K562 (cell line): ENCODE measurements at regions of chr16 and their contacts with region 1.

Region 1: DNA sequence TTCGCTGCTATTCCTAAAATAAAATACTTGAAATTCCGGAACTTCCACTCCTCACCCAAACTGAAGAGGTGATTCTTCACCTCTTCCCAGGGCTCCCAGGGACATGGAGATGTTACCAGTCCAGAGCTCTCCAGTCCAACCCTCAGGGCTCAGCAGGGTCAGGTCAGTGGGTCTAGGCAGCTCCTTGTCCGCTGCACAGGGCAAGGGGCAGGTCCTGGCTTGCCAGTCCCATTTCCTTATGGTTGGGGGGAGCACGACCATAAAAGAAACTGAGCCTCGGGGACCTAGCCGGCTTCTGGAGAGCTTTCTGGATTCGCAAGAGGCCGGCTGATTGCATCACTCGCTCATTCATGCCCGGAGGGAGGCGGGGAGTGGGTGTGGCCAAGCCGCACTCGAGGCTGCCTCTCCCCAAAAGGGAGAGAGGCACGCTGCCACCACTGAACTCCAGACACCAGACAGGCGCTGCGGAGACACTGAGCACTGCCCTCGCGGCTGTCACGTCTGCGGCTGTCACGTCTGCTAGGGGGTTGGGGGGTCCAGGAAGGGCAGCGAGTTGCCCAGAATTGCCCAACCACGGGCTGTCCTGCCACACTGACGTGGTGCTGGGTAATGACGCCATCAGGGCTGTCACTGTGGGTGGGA is 15.8 kb downstream of the SLC7A5 start:
- DNase-seq: peak; percentile 89 to 93 (median 92)
- ATAC-seq: peak; percentile 73
- H3K4me3 ChIP-seq: peak overlapping the region; percentile 28
- H3K27ac ChIP-seq: peak overlapping the region; percentile 98
- H3K4me1 ChIP-seq: peaks cover 56 to 85% of the 10 kb centered on the region in 2 experiments
- H3K27me3 ChIP-seq: no peaks in the 10 kb centered on the region
- CTCF ChIP-seq: no peak
- EP300 ChIP-seq: peak; percentile 62
- POLR2A ChIP-seq: peak; percentile 56
- RAD21 ChIP-seq: peak in 1 of 2 experiments; percentile 19; a peak in 1 of 4 replicates

Region 2: DNA sequence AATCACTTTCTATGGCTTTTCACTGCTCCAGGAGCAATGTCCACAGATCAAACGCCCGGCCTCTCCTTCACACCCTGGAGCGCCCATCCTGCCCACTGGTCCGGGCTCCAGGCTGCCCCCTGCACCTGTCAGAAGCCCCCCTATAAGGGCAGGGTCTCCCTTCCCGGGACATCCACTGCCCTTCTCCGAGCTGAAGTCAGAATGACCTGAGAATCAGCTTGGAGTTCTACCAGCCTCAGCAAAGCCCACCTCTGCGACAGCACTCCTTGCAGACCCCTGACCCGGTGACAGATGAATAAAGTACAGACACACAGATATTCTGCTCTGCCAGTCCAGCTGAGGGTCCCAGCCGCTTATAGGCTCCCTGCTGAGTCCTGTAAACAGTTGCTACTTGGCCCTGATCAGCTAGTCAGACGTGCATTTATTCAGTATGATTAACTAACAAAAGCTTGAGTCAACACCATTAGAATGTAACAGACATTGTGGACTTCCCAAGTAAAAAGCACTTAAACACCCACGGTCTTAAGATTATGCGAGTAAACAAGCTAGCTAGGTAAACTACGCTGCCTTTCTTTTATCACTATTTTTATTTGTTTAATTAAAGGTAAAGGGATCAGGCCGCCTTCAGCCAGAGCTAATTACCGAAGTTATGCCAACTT is 10.9 kb after region 1 on chr16:
- CTCF ChIA-PET with region 1: no interaction called
- POLR2A ChIA-PET with region 1: interaction called, 70 read pairs
- in situ Hi-C with region 1: no loop called
- intact Hi-C with region 1: no loop called
- DNase-seq: no peak
- ATAC-seq: no peak
- H3K4me3 ChIP-seq: no peak overlapping the region
- H3K27ac ChIP-seq: no peak overlapping the region
- H3K4me1 ChIP-seq: peaks cover 41 to 50% of the 10 kb centered on the region in 2 experiments
- H3K27me3 ChIP-seq: no peaks in the 10 kb centered on the region
- CTCF ChIP-seq: no peak
- EP300 ChIP-seq: no peak
- POLR2A ChIP-seq: no peak
- RAD21 ChIP-seq: no peak

Region 3: DNA sequence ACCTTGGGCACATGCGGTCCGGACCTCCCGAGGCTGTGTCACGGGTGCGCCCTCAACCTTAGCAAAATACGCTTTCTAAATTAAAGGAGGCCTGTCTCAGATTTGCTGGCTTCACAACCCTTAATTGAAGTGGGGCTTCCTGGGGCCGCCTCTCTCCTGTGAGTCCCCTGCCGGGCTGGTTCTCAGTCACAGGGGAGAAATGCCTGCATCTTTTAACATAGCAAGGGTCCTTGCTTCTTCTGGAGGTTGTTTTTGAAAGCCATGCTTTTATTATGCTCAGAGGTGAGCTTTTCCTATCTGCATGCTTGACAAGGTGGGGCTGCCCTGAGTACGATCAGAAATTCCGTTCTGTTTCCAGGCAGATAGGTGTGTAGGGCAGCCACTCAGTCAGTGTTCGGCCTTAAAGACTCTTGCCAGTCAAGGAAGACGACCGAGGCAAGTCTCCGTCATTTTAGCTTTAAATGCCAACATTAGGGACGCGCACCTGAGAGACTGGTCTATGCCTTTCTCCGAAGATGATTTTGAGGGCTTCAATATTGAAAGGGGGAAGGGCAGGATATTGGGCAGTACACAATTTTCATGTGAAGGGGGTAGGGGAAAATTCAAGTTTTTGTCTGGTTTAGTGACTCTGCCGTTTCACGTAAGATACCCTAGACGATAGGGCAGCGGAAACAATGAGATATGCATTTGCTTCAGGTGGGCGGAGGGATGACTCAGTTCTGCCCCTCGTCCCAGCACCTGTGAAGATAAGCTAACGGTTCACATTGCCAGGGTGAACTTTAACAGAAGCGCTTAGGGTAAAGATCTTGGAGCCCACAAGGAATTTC is 21.3 kb after region 1 on chr16:
- CTCF ChIA-PET with region 1: interaction called, 31 read pairs
- POLR2A ChIA-PET with region 1: interaction called, 70 read pairs
- in situ Hi-C with region 1: no loop called
- intact Hi-C with region 1: loop called (anchors 2 kb)
- DNase-seq: peak in 2 of 4 experiments; percentile 19 to 29
- ATAC-seq: no peak
- H3K4me3 ChIP-seq: no peak overlapping the region
- H3K27ac ChIP-seq: peak overlapping the region; percentile 35; the same call in 1 of the 3 replicates
- H3K4me1 ChIP-seq: peaks cover 16% of the 10 kb centered on the region in 2 experiments; a peak in 4 of 5 replicates
- H3K27me3 ChIP-seq: peaks cover 2 to 14% of the 10 kb centered on the region in 2 experiments; a peak in 3 of 5 replicates
- CTCF ChIP-seq: no peak
- EP300 ChIP-seq: peak; percentile 70; the same call in 1 of the 2 replicates
- POLR2A ChIP-seq: no peak
- RAD21 ChIP-seq: no peak

Region 4: DNA sequence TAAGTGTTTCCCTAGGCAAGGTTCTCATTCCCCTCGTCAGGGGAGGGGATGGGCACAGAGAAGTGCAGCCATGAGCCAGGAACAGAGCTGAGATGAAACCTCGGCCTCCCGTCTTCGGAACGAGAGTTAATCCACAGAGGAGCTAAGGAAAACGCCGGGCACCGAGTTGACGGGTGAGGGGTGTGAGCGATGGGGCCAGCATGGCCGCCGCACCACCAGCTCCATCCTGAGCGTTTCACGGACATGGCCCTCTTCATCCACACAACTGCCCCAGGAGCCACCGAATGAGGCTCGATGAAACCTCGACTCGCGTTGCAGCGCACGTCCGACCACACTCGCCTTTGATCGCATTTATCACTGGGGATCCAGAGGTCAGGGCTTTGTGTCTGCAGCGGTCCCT is 61.3 kb after region 1 on chr16:
- CTCF ChIA-PET with region 1: interaction called, 18 read pairs
- POLR2A ChIA-PET with region 1: interaction called, 4 read pairs
- in situ Hi-C with region 1: no loop called
- intact Hi-C with region 1: no loop called
- DNase-seq: no peak
- ATAC-seq: no peak
- H3K4me3 ChIP-seq: no peak overlapping the region
- H3K27ac ChIP-seq: no peak overlapping the region
- H3K4me1 ChIP-seq: peaks cover 10 to 28% of the 10 kb centered on the region in 2 experiments; a peak in 4 of 5 replicates
- H3K27me3 ChIP-seq: peaks cover 2 to 22% of the 10 kb centered on the region in 2 experiments; a peak in 3 of 5 replicates
- CTCF ChIP-seq: no peak
- EP300 ChIP-seq: no peak
- POLR2A ChIP-seq: no peak
- RAD21 ChIP-seq: no peak